Sciatic nerve (tissue), 2 donors: ENCODE measurements at regions of chr19 and their contacts with region 1.

Region 1: DNA sequence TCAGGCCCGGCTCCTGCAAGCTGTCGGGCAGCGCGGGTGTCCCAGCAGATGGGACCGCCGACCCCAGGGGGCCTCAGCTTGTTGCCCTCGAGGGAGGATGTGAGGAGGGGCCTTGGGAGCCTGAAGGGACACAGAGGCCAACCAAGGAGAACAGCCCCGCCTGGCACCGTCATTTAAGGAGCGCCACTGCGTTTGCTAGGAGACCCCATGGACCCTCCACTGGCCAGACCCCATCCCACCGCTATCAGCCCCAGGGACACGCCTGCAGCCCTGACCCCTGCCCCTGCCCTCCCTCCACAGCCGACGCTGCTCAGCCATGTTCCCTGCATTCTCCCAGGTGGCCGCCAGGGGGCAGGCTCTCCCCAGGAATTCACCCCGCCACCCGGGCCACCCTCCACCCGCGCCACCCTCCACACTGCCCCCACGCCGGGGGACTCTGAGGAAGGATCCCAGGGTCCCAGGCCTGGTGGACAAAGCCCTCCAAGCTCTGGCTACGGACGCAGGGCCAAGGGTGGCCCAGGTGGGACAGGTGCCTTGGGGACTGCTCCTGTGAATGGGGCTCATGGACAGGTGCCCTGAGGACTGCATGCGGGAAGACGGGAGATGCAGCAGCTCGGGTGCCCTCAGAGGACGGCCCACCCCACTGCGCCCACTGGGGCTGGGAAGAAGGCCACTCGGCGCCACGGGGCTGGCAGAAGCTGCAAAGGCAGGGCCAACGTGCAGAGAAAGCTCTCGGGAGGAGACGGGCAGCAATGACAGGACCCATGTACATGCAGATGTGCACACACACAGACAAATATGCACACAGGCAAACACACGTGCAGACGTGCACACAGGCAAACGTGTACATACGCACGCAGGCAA is 34.4 kb downstream of the PIP5K1C start:
- DNase-seq: peak; percentile 85
- ATAC-seq: peak; percentile 25

Region 2: DNA sequence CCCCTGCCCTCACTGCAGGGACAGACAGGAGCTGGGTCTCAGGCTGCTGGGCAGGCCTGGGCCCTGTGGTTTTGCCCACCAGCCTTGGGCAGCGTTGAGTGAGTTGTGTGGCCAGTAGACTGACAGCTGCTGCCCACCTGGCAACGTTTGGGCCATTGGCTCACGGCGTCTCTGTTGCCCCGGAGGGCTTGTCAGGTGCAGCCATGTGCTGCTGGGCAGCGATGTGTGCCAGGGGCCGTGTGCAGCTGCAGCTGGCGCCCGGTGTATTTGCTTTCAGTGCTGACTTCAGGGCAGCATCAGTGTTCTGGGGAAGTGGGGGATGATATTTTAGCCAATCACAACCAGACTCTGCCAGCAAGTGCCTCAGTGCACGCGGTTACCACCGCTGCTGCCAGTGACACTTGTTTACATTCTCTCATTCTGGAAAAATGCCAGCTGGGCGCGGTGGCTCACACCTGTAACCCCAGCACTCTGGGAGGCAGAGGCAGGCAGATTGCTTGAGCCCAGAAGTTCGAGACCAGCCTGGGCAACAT is 149.2 kb before region 1 on chr19:
- intact Hi-C with region 1: no loop called
- DNase-seq: no peak
- ATAC-seq: no peak

Region 3: DNA sequence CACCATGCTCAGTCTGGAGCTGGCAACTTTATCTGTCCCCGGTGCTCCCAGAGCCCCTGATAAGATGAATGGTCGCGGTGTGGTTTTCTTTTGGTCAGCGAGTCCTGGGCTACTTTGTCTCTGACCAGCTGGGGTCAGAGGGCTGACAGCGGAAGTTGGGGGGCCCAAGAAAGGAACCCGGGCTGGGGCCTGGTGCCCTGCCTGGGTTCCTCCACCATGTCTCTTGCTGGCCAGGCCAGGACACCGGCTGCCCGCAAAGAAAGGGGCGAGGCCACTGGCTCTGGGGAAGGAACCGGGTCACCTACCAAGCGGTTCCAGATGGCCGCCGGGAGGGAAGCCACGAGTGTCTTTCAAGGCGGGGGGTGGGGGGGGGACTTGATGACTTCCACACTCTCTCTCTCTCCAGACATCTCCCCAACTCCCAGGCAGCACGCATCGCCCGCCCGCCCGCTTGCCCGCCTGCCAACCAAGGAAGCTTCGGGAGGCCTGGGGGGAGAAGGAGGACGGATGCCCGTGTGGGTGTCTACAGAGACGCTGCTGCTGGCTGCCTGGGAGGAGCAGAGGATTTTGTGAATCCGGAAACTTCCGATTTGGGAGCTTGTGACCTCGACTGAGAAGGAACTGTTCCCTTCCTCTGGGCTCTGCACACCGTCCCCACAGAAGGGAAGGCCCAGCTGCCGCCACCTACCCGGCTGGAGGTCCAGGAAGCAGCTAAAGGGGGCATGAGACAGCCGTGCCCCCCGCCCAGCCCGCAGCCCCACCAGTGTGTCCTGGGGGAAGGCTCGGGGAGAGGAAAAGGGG is 33.3 kb after region 1 on chr19:
- intact Hi-C with region 1: loop called (anchors 2 kb)
- DNase-seq: no peak
- ATAC-seq: peak; percentile 76

Region 4: DNA sequence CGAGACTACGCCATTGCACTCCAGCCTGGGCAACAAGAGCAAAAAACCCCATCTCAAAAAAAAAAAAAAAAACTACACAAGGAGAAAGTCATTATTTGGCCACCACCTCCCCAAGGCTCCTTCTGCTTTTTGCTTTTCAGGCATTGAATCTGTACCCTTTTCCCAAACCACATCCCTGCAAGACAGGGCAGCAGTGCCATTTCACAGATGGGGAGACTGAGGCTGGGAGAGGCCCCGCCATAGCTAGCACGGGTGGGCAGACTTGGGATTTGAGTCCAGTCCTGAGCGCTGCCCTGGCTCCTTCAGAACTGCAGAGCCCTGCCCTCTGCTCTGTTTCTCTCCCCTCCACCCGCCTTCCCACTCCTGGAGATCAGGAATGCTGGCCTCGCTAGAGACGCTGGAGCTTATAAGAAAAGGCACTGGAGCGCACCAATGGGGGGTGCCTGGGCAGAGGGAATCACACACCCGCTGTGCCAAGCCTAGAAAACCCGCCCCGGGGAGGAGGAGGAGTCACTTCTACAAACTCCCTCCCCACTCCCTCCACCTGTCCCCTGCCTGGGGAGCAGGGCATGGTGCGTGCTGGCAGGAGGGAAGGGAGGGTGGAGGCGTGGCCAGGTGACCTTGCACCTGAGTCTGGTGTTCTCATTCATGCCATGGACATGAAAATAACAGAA is 59.9 kb after region 1 on chr19:
- intact Hi-C with region 1: no loop called
- DNase-seq: no peak
- ATAC-seq: no peak